WTC11 (cell line): ENCODE measurements at regions of chr2 and their contacts with region 1.

Region 1: DNA sequence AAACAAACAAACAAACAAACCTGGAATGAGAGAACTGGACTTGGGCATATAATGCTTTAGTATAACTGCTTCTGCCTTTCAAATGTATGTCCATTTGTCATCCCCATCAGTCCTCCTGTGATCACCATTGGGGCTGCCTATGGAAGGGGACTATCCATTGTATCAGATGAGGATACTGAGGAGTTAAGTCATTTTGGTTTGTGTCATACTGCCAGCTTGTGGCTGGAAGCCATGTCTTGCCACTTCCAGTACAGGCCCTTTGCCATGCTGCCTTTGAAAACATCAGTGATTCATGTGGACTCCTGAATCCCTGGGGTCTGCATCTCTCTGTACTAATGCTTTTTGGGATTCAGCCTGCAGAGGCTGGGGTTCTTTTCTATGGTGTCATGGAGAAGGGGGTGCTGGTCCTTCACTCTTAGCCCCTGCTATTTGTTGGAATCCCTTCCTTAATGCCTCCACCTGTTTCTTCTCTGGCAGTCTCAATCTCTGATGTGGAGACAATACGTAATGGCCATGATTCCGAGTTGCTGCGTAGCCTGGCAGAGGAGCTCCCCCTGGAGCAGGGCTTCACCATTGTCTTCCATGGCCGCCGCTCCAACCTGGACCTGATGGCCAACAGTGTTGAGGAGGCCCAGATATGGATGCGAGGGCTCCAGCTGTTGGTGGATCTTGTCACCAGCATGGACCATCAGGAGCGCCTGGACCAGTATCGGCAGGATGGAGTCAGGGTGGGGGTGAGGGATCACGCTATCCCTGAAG is 10.6 kb downstream of the PLCD4 start:
- DNase-seq: peak; percentile 22
- ATAC-seq: peak; percentile 60
- H3K4me3 Mint-ChIP-seq: no peak overlapping the region
- H3K27ac Mint-ChIP-seq: no peak overlapping the region
- H3K4me1 Mint-ChIP-seq: peaks cover 3% of the 10 kb centered on the region
- H3K27me3 Mint-ChIP-seq: no peaks in the 10 kb centered on the region
- CTCF ChIP-seq: no peak

Region 2: DNA sequence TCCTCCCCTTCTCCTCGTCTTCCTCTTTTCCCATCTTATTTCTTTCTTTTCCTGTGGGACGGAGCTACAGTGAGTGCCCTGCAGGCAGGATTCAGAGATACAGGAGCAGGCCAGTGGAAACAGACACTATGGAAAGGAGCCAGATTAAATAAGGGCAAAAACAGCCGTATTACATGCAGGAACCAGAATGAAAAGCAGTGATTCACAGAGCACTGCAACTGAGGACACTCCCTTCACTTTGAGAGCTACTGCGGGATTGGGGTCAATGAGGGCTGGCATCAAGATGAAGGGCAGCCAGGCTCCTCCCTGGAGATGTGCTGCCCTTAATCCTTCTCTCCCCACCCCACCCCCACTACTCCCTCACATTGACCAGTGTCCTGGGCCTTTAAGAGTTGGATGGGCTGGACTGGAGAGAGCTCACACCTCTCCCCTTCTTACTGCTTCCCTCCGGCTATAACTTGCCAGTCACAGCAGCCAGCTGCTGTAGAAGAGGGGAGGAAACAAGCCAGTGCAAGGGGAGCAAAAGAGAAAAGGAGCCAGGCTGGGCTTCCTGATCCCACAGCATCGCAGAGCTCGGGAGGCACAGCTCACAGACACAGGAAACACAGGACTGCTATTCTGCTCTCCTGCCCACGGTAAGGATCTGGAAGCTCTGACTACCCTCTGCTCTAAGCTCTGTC is 10.7 kb before region 1 on chr2 and contains the start of gene PLCD4:
- CTCF ChIA-PET with region 1: interaction called, 13 read pairs
- POLR2A ChIA-PET with region 1: no interaction called
- DNase-seq: no peak
- ATAC-seq: peak; percentile 85
- H3K4me3 Mint-ChIP-seq: no peak within 1 kb of the TSS
- H3K27ac Mint-ChIP-seq: no peak within 1 kb of the TSS
- H3K4me1 Mint-ChIP-seq: peaks cover 4% of the 10 kb centered on the region; the same call in 1 of the 2 replicates
- H3K27me3 Mint-ChIP-seq: no peaks in the 10 kb centered on the region
- CTCF ChIP-seq: no peak
- total RNA-seq, gene PLCD4: 0.11 to 0.28 TPM (median 0.14 TPM) in 3 replicates